ENCODE measurements at regions of chr10 and their contacts with region 1.

Region 1: DNA sequence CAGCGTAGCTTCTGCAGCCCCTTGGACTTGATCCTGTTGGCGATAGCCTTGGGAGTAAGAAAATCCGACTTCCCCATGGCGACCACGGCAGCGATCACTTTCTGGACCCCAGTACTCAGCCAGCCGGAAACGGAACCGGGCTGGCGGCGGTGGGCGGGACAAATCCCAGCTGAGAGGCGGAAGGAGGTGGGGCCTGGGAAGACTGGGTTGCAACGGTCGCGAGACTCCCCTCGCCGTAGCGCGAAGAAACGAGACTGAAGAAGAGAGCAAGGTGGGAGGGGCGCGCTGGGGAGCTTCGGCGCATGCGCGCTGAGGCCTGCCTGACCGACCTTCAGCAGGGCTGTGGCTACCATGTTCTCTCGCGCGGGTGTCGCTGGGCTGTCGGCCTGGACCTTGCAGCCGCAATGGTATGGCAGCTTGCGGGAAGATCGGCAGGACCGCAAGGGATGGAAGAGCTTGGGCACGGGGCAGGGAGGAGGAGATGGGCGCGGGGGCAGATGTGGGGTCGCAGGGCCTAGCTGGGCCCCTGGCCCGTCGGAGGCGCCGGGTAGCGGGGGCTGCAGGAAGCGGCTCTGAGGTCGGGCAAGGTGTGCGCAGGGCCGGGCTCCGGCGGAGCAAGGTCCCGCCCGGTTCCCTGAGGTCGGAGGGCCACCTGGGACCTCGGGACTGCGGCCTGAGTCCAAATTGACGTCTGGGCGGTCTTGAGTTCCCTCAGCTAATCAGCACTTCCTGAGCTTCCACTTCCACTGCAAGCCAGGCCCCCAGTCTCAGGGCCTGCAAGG is at the starts of genes ATP5F1C and KIN:
- DNase-seq: peak; percentile 98
- H3K4me3 ChIP-seq: peak within 1 kb of the TSS; percentile 83 to 94 (median 91)
- H3K27ac ChIP-seq: peak within 1 kb of the TSS; percentile 87 to 91 (median 88)
- H3K4me1 ChIP-seq: peaks cover 0 to 64% (median 48%) of the 10 kb centered on the region in 4 donors
- H3K27me3 ChIP-seq: no peaks in the 10 kb centered on the region
- CTCF ChIP-seq: no peak
- EP300 ChIP-seq: no peak
- POLR2A ChIP-seq: peak; percentile 76 to 84
- total RNA-seq, gene ATP5F1C: 335 to 363 (median 358) TPM
- total RNA-seq, gene KIN: 5.9 to 17.2 (median 7.6) TPM

Region 2: GRCh38 chr10:5889624-5890451 is 1898.2 kb before region 1 on chr10 and contains the starts of genes ANKRD16 and FBH1:
- intact Hi-C with region 1: loop called (anchors 10 kb)
- DNase-seq: peak; percentile 99
- H3K4me3 ChIP-seq: peak within 1 kb of the TSS; percentile 82 to 91 (median 84)
- H3K27ac ChIP-seq: peak within 1 kb of the TSS; percentile 81 to 94 (median 90)
- H3K4me1 ChIP-seq: peaks cover 0 to 49% (median 43%) of the 10 kb centered on the region in 4 donors
- H3K27me3 ChIP-seq: no peaks in the 10 kb centered on the region
- CTCF ChIP-seq: no peak
- EP300 ChIP-seq: no peak
- POLR2A ChIP-seq: peak; percentile 57 to 62
- total RNA-seq, gene ANKRD16: 8.6 to 11.4 (median 9.4) TPM
- total RNA-seq, gene FBH1: 68.7 to 85.9 (median 80.4) TPM

Region 3: DNA sequence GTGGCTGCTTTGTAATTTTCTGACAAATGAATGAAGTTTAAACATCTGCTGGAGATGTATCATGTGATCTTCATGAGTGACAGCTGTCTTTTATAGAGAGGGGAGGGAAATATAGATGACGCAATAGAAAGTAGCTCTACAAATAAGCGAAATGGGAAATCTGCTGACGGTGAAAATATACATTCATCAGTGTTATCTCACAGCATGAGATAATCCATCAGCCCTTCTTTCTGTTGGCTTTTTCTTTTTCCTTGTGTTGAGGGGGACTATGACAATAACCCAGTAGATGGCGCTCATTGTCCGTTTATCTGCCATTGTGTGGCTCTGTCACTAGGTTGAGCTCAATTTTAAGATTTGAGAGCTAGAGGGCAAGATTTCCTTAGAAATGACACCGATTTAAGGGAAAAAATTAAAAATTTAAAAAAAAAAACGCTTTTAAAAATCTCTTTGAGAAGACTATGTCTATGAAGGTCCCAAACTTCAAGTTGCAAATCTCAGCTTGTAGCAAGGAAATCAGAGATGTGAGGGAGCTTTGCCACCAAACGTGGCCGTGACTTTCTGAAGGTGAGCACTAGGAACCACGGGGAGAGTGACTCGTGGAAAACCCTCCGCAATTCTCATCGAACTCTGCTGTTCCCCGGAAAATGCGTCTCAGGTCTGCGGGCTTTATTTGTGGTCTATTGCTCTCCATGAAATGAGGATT is 262.6 kb before region 1 on chr10:
- intact Hi-C with region 1: loop called (anchors 10 kb)
- DNase-seq: peak; percentile 80
- H3K4me3 ChIP-seq: no peak overlapping the region
- H3K27ac ChIP-seq: no peak overlapping the region
- H3K4me1 ChIP-seq: peaks cover 0 to 4% (median 0%) of the 10 kb centered on the region in 4 donors
- H3K27me3 ChIP-seq: peaks cover 0 to 8% (median 0%) of the 10 kb centered on the region in 3 donors
- CTCF ChIP-seq: peak; percentile 82 to 91 (median 86)
- EP300 ChIP-seq: no peak
- POLR2A ChIP-seq: no peak

Region 4: DNA sequence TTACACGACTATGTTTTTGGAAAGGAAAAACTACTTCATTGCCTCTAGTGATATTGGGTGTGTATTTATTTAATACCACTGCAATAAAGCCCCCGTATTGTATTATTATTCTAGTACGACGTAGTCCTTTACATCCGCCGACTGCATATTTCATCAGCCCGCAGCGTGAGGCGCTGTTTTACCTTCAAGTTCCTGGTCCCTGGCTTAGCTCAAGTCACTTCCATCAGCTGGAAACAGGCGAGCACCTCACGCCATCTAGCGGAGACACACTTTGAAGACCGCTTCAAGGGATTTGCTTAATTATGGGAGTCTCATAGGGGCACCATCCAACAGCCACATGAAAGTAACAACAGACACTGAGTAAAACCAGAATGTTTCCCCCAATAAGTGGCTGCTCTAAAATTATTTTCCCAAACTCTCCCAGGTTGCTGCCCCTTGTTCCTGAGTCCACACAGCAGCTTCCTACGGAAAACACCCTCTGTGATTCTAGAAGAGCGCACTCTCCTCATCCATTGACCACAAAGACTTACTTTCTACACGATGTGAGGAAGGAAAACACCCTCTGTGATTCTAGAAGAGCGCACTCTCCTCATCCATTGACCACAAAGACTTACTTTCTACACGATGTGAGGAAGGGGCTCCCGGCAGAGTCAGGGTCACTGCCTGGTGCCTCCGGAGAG is 100.7 kb before region 1 on chr10:
- intact Hi-C with region 1: loop called (anchors 10 kb)
- DNase-seq: peak; percentile 93
- H3K4me3 ChIP-seq: no peak overlapping the region
- H3K27ac ChIP-seq: no peak overlapping the region
- H3K4me1 ChIP-seq: no peaks in the 10 kb centered on the region
- H3K27me3 ChIP-seq: no peaks in the 10 kb centered on the region
- CTCF ChIP-seq: peak; percentile 86 to 98 (median 96)
- EP300 ChIP-seq: no peak
- POLR2A ChIP-seq: no peak

Region 5: DNA sequence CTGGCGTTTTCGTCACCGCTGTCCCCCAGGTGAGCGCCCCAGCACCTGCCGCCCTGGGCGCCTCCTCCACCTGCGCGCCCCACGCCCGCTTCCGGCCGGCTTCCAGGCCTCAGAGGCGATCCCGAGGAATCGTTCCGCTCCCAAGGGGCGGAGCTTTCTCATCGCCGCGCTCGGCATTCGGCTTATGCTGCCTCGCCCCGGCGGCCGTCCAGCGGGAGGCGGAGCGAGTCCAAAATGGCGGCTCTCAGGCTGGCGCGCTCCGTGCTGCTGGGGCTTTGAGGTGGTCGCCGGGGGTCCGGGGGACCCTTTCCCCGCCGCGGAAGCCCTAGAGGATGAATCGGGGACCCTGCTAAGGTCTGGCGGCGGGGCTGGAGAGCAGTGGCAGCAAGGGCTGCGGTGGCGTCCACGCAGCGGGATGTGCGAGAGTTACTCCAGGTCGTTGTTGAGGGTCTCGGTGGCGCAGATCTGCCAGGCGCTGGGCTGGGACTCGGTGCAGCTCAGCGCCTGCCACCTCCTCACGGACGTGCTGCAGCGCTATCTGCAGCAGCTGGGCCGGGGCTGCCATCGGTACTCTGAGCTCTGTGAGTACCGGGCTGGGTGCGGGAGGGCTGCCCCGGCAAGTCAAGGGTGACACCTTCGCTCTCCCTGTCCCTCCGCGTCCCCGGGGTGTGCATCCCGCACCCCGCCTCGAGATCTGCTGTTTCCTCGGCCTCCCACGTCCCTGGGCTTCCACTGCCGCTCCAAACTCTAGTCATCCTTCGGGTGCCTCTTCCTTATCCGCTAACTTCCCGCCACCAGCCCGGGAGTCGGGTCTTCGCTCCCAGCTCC is 30.5 kb after region 1 on chr10 and contains the start of gene TAF3:
- intact Hi-C with region 1: loop called (anchors 2 kb)
- DNase-seq: peak; percentile 96
- H3K4me3 ChIP-seq: peak within 1 kb of the TSS; percentile 76 to 96 (median 92)
- H3K27ac ChIP-seq: peak within 1 kb of the TSS; percentile 71 to 83 (median 80)
- H3K4me1 ChIP-seq: peaks cover 0 to 22% (median 17%) of the 10 kb centered on the region in 4 donors
- H3K27me3 ChIP-seq: no peaks in the 10 kb centered on the region
- CTCF ChIP-seq: no peak
- EP300 ChIP-seq: no peak
- POLR2A ChIP-seq: peak; percentile 40 to 42
- total RNA-seq, gene TAF3: 5.2 to 12.2 (median 7.8) TPM